Right cardiac atrium (tissue), 5 donors: ENCODE measurements at regions of chr3 and their contacts with region 1.

Region 1: GRCh38 chr3:42739401-42740158 is 33.5 kb downstream of the CCDC13 start:
- DNase-seq: peak; percentile 81 to 94 (median 94)
- ATAC-seq: peak; percentile 92 to 93
- H3K4me3 ChIP-seq: no peak overlapping the region
- H3K27ac ChIP-seq: peak overlapping the region; percentile 86
- H3K4me1 ChIP-seq: no peaks in the 10 kb centered on the region
- H3K27me3 ChIP-seq: no peaks in the 10 kb centered on the region

Region 2: GRCh38 chr3:42652611-42653302 is 86.8 kb before region 1 on chr3:
- intact Hi-C with region 1: loop called in 3 of 4 experiments (anchors 2 to 10 kb)
- DNase-seq: peak; percentile 73 to 84 (median 80)
- ATAC-seq: peak; percentile 40 to 66
- H3K4me3 ChIP-seq: peak overlapping the region; percentile 82
- H3K27ac ChIP-seq: peak overlapping the region; percentile 72
- H3K4me1 ChIP-seq: peaks cover 18% of the 10 kb centered on the region
- H3K27me3 ChIP-seq: no peaks in the 10 kb centered on the region

Region 3: GRCh38 chr3:42701142-42702065 is 38.2 kb before region 1 on chr3:
- intact Hi-C with region 1: loop called in 1 of 4 experiments (anchors 5 kb)
- DNase-seq: peak; percentile 73 to 91 (median 90)
- ATAC-seq: peak; percentile 67 to 72
- H3K4me3 ChIP-seq: peak overlapping the region; percentile 47
- H3K27ac ChIP-seq: peak overlapping the region; percentile 97
- H3K4me1 ChIP-seq: no peaks in the 10 kb centered on the region
- H3K27me3 ChIP-seq: no peaks in the 10 kb centered on the region